ENCODE measurements at regions of chr4 and their contacts with region 1.

Region 1: GRCh38 chr4:169485791-169486742 is 126.3 kb downstream of the NEK1 start:
- DNase-seq: peak; percentile 49
- ATAC-seq: peak; percentile 74
- H3K4me3 ChIP-seq: no peak overlapping the region
- H3K27ac ChIP-seq: no peak overlapping the region
- H3K4me1 ChIP-seq: 0 out of 4 replicates have a peak, but pooled peaks cover 0 to 3% of the 10 kb centered on the region in 2 experiments
- H3K27me3 ChIP-seq: no peaks in the 10 kb centered on the region
- CTCF ChIP-seq: peak; percentile 26 to 71 (median 69); a peak in 4 of 6 replicates
- POLR2A ChIP-seq: no peak
- RAD21 ChIP-seq: peak; percentile 90

Region 2: DNA sequence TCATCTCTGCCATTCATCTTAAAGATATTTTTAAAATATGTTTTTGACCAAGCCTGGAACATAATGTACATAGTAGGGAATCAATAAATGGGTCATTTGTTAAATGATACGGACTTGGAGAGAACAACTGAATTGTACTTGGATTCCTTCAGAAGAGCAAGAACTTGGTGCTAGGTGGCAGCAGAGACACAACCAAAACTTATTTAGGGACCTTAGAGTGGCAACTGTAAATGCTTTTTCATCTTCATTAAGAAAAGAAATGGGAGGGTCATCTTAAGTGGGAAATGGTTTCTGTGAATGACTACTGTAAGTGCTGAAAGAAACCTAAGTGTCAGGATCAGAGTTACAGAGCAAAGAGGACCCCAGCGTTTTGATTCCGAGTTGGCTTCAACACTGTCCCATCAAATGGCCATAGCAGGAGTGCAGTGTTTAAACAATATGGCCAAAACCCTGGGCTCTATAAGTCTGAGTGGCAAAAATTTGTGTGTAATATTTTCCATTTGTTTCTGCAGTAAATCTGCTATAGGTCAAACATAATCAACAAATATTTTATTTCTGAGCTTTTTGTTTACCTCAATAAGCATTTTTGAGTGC is 775.6 kb before region 1 on chr4:
- CTCF ChIA-PET with region 1: no interaction called
- POLR2A ChIA-PET with region 1: no interaction called
- RAD21 ChIA-PET with region 1: no interaction called
- intact Hi-C with region 1: loop called (anchors 10 kb)
- DNase-seq: peak; percentile 29
- ATAC-seq: peak; percentile 54; the same call in 1 of the 2 replicates
- H3K4me3 ChIP-seq: no peak overlapping the region
- H3K27ac ChIP-seq: no peak overlapping the region
- H3K4me1 ChIP-seq: peaks cover 0 to 11% of the 10 kb centered on the region in 2 experiments; a peak in 1 of 4 replicates
- H3K27me3 ChIP-seq: no peaks in the 10 kb centered on the region
- CTCF ChIP-seq: peak; percentile 46 to 54 (median 47); a peak in 5 of 6 replicates
- POLR2A ChIP-seq: no peak
- RAD21 ChIP-seq: peak; percentile 74

Region 3: DNA sequence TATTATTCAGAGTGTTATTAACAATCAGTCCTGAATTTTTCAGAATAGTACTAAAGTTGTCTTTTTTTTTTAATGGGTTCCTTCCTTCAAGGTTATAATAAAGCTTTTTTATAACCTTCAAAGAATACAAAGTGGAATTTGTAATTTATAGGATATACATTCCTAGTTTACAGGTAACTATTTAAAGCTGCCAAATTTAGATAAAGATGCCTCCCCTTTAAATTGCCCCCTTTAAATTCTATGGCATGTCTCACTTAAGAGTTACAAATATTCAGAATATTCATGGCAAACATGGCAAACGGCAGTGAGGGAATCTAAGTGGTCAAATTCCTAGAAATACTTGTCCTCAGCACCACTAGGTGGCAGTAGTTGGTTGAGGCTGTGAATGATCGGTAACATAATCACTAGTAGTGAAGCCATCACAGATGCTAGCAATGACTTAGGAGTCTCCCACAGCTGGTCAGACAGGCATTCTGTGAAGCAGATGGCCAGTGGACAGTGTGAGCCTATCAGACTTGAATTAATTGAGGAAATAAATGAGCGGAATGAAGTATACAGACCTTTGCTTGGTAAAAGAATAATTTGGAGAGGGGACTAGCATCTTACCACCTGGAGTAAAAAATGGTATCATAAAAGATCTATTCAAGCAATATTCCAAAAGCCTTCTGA is 562.4 kb before region 1 on chr4:
- CTCF ChIA-PET with region 1: interaction called, 4 read pairs
- POLR2A ChIA-PET with region 1: no interaction called
- RAD21 ChIA-PET with region 1: no interaction called
- intact Hi-C with region 1: loop called (anchors 1 kb)
- DNase-seq: peak; percentile 61
- ATAC-seq: peak; percentile 84
- H3K4me3 ChIP-seq: no peak overlapping the region
- H3K27ac ChIP-seq: peak overlapping the region; percentile 17; the same call in 1 of the 2 replicates
- H3K4me1 ChIP-seq: no peaks in the 10 kb centered on the region
- H3K27me3 ChIP-seq: no peaks in the 10 kb centered on the region
- CTCF ChIP-seq: peak; percentile 63 to 83 (median 74)
- POLR2A ChIP-seq: no peak
- RAD21 ChIP-seq: peak; percentile 78

Region 4: GRCh38 chr4:169024762-169025161 is 461.3 kb before region 1 on chr4:
- CTCF ChIA-PET with region 1: interaction called, 4 read pairs
- POLR2A ChIA-PET with region 1: no interaction called
- RAD21 ChIA-PET with region 1: interaction called in 1 of 2 experiments, 4 read pairs
- intact Hi-C with region 1: loop called (anchors 1 kb)
- DNase-seq: peak; percentile 15
- ATAC-seq: peak; percentile 93
- H3K4me3 ChIP-seq: no peak overlapping the region
- H3K27ac ChIP-seq: no peak overlapping the region
- H3K4me1 ChIP-seq: peaks cover 2 to 9% of the 10 kb centered on the region in 2 experiments; a peak in 3 of 4 replicates
- H3K27me3 ChIP-seq: no peaks in the 10 kb centered on the region
- CTCF ChIP-seq: peak; percentile 62 to 76 (median 63); a peak in 5 of 6 replicates
- POLR2A ChIP-seq: no peak
- RAD21 ChIP-seq: peak; percentile 94

Region 5: DNA sequence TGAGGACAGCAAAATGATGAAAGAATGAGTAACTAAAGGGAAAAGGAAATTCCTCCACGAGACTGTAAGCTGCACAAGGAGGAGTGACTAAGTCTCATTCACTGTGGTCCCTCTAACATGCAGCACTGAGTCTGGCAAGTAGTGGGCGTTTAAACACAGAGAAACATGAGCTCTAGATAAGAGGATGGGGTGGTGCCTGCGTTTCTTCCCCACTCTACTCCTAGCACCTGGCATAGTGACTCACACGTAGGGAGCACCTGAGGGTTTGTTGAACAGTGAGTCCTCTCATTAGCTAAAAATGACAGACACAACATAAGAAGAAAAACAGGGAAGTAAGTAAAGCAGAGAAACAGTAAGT is 370.2 kb before region 1 on chr4:
- CTCF ChIA-PET with region 1: no interaction called
- POLR2A ChIA-PET with region 1: no interaction called
- RAD21 ChIA-PET with region 1: no interaction called
- intact Hi-C with region 1: loop called (anchors 10 kb)
- DNase-seq: peak; percentile 89
- ATAC-seq: peak; percentile 91
- H3K4me3 ChIP-seq: no peak overlapping the region
- H3K27ac ChIP-seq: peak overlapping the region; percentile 44
- H3K4me1 ChIP-seq: peaks cover 6 to 30% of the 10 kb centered on the region in 2 experiments; a peak in 3 of 4 replicates
- H3K27me3 ChIP-seq: no peaks in the 10 kb centered on the region
- CTCF ChIP-seq: 0 out of 6 replicates have a peak, but pooled peaks of 1 of the 3 experiments have one; percentile 21
- POLR2A ChIP-seq: no peak
- RAD21 ChIP-seq: peak; percentile 73

Region 6: GRCh38 chr4:169270810-169271691 is 215.0 kb before region 1 on chr4 and contains the start of gene SH3RF1:
- CTCF ChIA-PET with region 1: no interaction called
- POLR2A ChIA-PET with region 1: no interaction called
- RAD21 ChIA-PET with region 1: no interaction called
- intact Hi-C with region 1: loop called (anchors 5 kb)
- DNase-seq: no peak
- ATAC-seq: peak; percentile 87
- H3K4me3 ChIP-seq: peak within 1 kb of the TSS; percentile 75 to 87
- H3K27ac ChIP-seq: peak within 1 kb of the TSS; percentile 88
- H3K4me1 ChIP-seq: peaks cover 30 to 51% of the 10 kb centered on the region in 2 experiments
- H3K27me3 ChIP-seq: no peaks in the 10 kb centered on the region
- CTCF ChIP-seq: no peak; a peak in 1 of 6 replicates
- POLR2A ChIP-seq: peak; percentile 58
- RAD21 ChIP-seq: no peak
- total RNA-seq, gene SH3RF1: 59.5 TPM